ENCODE measurements at regions of chr2 and their contacts with region 1.

Region 1: GRCh38 chr2:136117909-136118818 is at the start of gene CXCR4:
- DNase-seq: peak; percentile 88 to 93
- ATAC-seq: peak; percentile 26 to 49 (median 31)
- H3K4me3 ChIP-seq: peak within 1 kb of the TSS; percentile 98
- H3K4me3 Mint-ChIP-seq: peak within 1 kb of the TSS; percentile 90
- H3K27ac ChIP-seq: peak within 1 kb of the TSS; percentile 98
- H3K27ac Mint-ChIP-seq: peak within 1 kb of the TSS; percentile 85 to 90
- H3K4me1 ChIP-seq: peaks cover 32% of the 10 kb centered on the region
- H3K4me1 Mint-ChIP-seq: peaks cover 31 to 55% of the 10 kb centered on the region in 2 donors
- H3K27me3 ChIP-seq: no peaks in the 10 kb centered on the region
- H3K27me3 Mint-ChIP-seq: no peaks in the 10 kb centered on the region
- CTCF ChIP-seq: no peak
- total RNA-seq, gene CXCR4: 582 to 848 (median 741) TPM

Region 2: GRCh38 chr2:135951041-135951583 is 167.1 kb before region 1 on chr2:
- intact Hi-C with region 1: loop called (anchors 10 kb)
- DNase-seq: no peak
- ATAC-seq: no peak
- H3K4me3 ChIP-seq: no peak overlapping the region
- H3K4me3 Mint-ChIP-seq: no peak overlapping the region
- H3K27ac ChIP-seq: no peak overlapping the region
- H3K27ac Mint-ChIP-seq: no peak overlapping the region
- H3K4me1 ChIP-seq: no peaks in the 10 kb centered on the region
- H3K4me1 Mint-ChIP-seq: peaks cover 20 to 42% of the 10 kb centered on the region in 2 donors
- H3K27me3 ChIP-seq: no peaks in the 10 kb centered on the region
- H3K27me3 Mint-ChIP-seq: no peaks in the 10 kb centered on the region
- CTCF ChIP-seq: no peak

Region 3: GRCh38 chr2:135965756-135966155 is 152.4 kb before region 1 on chr2:
- intact Hi-C with region 1: no loop called
- DNase-seq: no peak
- ATAC-seq: no peak
- H3K4me3 ChIP-seq: no peak overlapping the region
- H3K4me3 Mint-ChIP-seq: no peak overlapping the region
- H3K27ac ChIP-seq: no peak overlapping the region
- H3K27ac Mint-ChIP-seq: no peak overlapping the region
- H3K4me1 ChIP-seq: no peaks in the 10 kb centered on the region
- H3K4me1 Mint-ChIP-seq: peaks cover 20 to 40% of the 10 kb centered on the region in 2 donors
- H3K27me3 ChIP-seq: no peaks in the 10 kb centered on the region
- H3K27me3 Mint-ChIP-seq: no peaks in the 10 kb centered on the region
- CTCF ChIP-seq: no peak

Region 4: DNA sequence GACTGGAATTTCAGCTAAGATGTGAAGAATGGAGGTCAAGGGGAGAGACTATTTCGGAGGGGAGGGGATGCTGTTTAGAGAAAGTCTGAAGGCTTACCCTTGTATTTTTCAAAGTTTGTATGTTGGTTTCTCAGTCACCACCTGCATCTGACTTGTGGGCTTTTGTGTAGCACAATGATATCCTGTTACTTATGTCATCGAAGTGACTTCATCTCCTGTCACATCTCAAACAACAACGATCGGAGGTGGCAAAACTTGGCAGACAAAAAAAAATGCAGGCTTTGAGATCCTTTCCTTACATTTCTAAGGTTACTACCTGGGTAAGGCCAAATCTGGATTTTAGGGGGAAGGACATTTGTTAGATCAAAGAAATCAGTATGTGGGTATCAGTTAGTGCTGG is 11.4 kb after region 1 on chr2:
- intact Hi-C with region 1: loop called (anchors 1 kb)
- DNase-seq: peak in 1 of 2 donors; percentile 91
- ATAC-seq: peak; percentile 48 to 72 (median 69)
- H3K4me3 ChIP-seq: no peak overlapping the region
- H3K4me3 Mint-ChIP-seq: peak overlapping the region; percentile 75
- H3K27ac ChIP-seq: peak overlapping the region; percentile 90
- H3K27ac Mint-ChIP-seq: peak overlapping the region; percentile 93 to 99
- H3K4me1 ChIP-seq: peaks cover 86% of the 10 kb centered on the region
- H3K4me1 Mint-ChIP-seq: peaks cover 54 to 81% of the 10 kb centered on the region in 2 donors
- H3K27me3 ChIP-seq: no peaks in the 10 kb centered on the region
- H3K27me3 Mint-ChIP-seq: peaks cover 3 to 6% of the 10 kb centered on the region in 2 donors
- CTCF ChIP-seq: no peak

Region 5: GRCh38 chr2:136225950-136226835 is 108.0 kb after region 1 on chr2:
- intact Hi-C with region 1: loop called (anchors 1 kb)
- DNase-seq: peak; percentile 72 to 77
- ATAC-seq: peak; percentile 85 to 94 (median 93)
- H3K4me3 ChIP-seq: no peak overlapping the region
- H3K4me3 Mint-ChIP-seq: peak overlapping the region; percentile 40
- H3K27ac ChIP-seq: peak overlapping the region; percentile 61
- H3K27ac Mint-ChIP-seq: peak overlapping the region; percentile 86 to 87
- H3K4me1 ChIP-seq: peaks cover 31% of the 10 kb centered on the region
- H3K4me1 Mint-ChIP-seq: peaks cover 22 to 32% of the 10 kb centered on the region in 2 donors
- H3K27me3 ChIP-seq: no peaks in the 10 kb centered on the region
- H3K27me3 Mint-ChIP-seq: peaks cover 10 to 30% of the 10 kb centered on the region in 2 donors
- CTCF ChIP-seq: no peak

Region 6: DNA sequence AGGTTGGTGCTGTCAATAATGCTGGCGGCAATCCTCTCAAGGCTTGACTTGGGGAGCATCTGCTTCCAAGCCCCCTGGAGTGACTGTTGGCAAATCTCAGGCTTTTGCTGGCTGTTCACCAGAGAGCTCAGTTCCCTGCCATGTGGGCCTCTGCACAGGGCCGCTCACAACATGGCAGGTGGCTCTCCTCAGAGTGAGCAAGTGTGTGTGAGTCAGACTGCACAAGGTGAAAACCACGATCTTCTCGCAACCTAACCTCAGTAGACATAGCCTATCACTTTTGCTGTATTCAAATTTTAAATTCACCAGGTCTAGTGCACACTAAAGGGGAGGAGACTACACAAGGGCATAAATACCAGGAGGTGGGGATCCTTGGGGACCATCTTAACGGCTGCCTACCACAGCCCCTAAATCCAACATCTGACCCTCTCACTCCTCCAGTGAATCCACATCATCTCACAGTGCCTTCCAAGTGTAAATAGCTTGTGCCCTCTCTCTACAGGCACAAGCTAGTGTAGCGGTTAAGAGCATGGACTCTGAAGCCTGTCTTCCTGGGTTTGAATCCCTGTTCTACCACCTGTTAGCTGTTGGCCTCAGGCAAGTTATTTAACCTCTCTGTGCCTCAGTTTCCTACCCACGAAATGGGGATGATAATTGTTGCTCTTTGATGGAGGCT is 187.5 kb after region 1 on chr2:
- intact Hi-C with region 1: loop called (anchors 5 kb)
- DNase-seq: peak; percentile 49 to 76
- ATAC-seq: peak; percentile 96 to 100 (median 98)
- H3K4me3 ChIP-seq: no peak overlapping the region
- H3K4me3 Mint-ChIP-seq: no peak overlapping the region
- H3K27ac ChIP-seq: no peak overlapping the region
- H3K27ac Mint-ChIP-seq: peak overlapping the region in 1 of 2 donors; percentile 72
- H3K4me1 ChIP-seq: peaks cover 10% of the 10 kb centered on the region
- H3K4me1 Mint-ChIP-seq: peaks cover 9 to 11% of the 10 kb centered on the region in 2 donors
- H3K27me3 ChIP-seq: no peaks in the 10 kb centered on the region
- H3K27me3 Mint-ChIP-seq: peaks cover 10 to 14% of the 10 kb centered on the region in 2 donors
- CTCF ChIP-seq: no peak